ENCODE measurements at regions of chr13 and their contacts with region 1.

Region 1: DNA sequence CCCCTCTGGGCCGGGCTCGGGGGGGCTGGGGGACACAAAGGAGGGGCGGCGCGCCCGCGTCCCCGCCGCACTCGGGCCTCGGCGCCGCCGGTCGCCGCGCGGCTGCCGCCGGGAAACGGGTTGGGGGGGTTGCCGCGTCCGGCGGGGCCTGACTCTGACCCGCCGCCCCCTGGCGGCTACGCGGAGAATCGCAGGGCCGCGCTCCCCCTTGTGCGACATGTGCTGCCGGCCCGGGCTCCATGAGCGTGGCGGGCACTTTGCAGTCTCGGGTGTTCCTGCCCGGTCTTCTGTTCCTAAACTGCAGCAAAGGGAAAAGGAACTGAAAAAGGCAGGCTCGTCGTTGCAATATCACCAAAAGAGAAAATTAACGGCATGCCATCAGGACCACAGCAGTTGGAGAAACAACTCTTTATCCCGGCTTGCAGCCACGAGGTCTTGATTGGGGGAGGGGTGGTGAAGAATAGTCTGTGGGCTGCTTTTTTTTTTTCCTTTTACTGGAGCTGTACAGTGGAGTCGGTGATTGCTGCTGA is 1.5 kb downstream of the MIR17HG start:
- DNase-seq: peak; percentile 81 to 86 (median 83)
- H3K4me3 ChIP-seq: peak overlapping the region; percentile 35 to 77 (median 76)
- H3K4me3 Mint-ChIP-seq: peak overlapping the region; percentile 89 to 93
- H3K27ac ChIP-seq: peak overlapping the region in 1 of 2 donors; percentile 46
- H3K27ac Mint-ChIP-seq: peak overlapping the region; percentile 53 to 93 (median 86)
- H3K4me1 ChIP-seq: peaks cover 10 to 23% of the 10 kb centered on the region in 2 donors
- H3K4me1 Mint-ChIP-seq: peaks cover 23% of the 10 kb centered on the region
- H3K27me3 ChIP-seq: peaks cover 4 to 17% of the 10 kb centered on the region in 2 donors
- H3K27me3 Mint-ChIP-seq: peaks cover 4 to 11% (median 6%) of the 10 kb centered on the region in 3 donors
- CTCF ChIP-seq: peak; percentile 94

Region 2: DNA sequence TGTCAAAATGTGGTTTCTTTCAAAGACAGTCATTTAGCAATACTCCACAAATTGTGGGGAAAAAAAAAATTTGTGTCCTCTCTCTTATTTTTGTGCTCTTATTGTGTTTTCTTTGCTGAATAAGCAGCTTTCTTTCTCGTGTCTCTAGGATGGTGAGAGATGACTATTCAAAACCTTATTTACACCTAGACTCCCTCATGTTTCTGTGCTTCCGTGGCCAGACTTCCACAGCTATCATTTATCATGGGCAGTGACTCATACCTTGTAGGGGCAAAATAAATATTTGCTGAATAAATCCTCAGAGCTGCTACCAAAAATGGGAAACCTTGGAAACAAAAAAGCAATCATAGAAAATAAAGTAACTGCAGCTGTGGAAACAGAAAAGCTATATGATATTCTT is 206.4 kb before region 1 on chr13:
- intact Hi-C with region 1: loop called in 1 of 2 experiments (anchors 10 kb)
- DNase-seq: no peak
- H3K4me3 ChIP-seq: no peak overlapping the region
- H3K4me3 Mint-ChIP-seq: no peak overlapping the region
- H3K27ac ChIP-seq: no peak overlapping the region
- H3K27ac Mint-ChIP-seq: peak overlapping the region in 1 of 7 donors; percentile 28
- H3K4me1 ChIP-seq: peaks cover 34 to 38% of the 10 kb centered on the region in 2 donors
- H3K4me1 Mint-ChIP-seq: peaks cover 31% of the 10 kb centered on the region
- H3K27me3 ChIP-seq: no peaks in the 10 kb centered on the region
- H3K27me3 Mint-ChIP-seq: peaks cover 1 to 5% (median 4%) of the 10 kb centered on the region in 3 donors
- CTCF ChIP-seq: no peak

Region 3: GRCh38 chr13:91406619-91407018 is 57.6 kb after region 1 on chr13:
- intact Hi-C with region 1: loop called in 1 of 2 experiments (anchors 10 kb)
- DNase-seq: peak in 2 of 3 donors; percentile 12 to 14
- H3K4me3 ChIP-seq: no peak overlapping the region
- H3K4me3 Mint-ChIP-seq: no peak overlapping the region
- H3K27ac ChIP-seq: no peak overlapping the region
- H3K27ac Mint-ChIP-seq: no peak overlapping the region
- H3K4me1 ChIP-seq: no peaks in the 10 kb centered on the region
- H3K4me1 Mint-ChIP-seq: peaks cover 2% of the 10 kb centered on the region
- H3K27me3 ChIP-seq: peaks cover 0 to 2% of the 10 kb centered on the region in 2 donors
- H3K27me3 Mint-ChIP-seq: peaks cover 2 to 3% (median 3%) of the 10 kb centered on the region in 3 donors
- CTCF ChIP-seq: peak; percentile 69